Activated CD4-positive, alpha-beta memory T cell treated with anti-CD3 and anti-CD28 coated beads, Interleukin-2, amount 10 ng/mL, durations not matched to agents 7 days and 5 days (primary cell): ENCODE measurements at regions of chr6 and their contacts with region 1.

Region 1: GRCh38 chr6:26270903-26271667 is 93.9 kb upstream of the BTN3A2 start:
- DNase-seq: peak; percentile 87
- H3K4me3 Mint-ChIP-seq: no peak overlapping the region
- H3K27ac Mint-ChIP-seq: no peak overlapping the region
- H3K4me1 Mint-ChIP-seq: peaks cover 35% of the 10 kb centered on the region
- H3K27me3 Mint-ChIP-seq: no peaks in the 10 kb centered on the region

Region 2: GRCh38 chr6:26103770-26104456 is 167.2 kb before region 1 on chr6:
- CTCF ChIA-PET with region 1: no interaction called
- POLR2A ChIA-PET with region 1: interaction called, 15 read pairs
- DNase-seq: peak; percentile 93
- H3K4me3 Mint-ChIP-seq: peak overlapping the region; percentile 80
- H3K27ac Mint-ChIP-seq: peak overlapping the region; percentile 99
- H3K4me1 Mint-ChIP-seq: peaks cover 23% of the 10 kb centered on the region
- H3K27me3 Mint-ChIP-seq: no peaks in the 10 kb centered on the region

Region 3: DNA sequence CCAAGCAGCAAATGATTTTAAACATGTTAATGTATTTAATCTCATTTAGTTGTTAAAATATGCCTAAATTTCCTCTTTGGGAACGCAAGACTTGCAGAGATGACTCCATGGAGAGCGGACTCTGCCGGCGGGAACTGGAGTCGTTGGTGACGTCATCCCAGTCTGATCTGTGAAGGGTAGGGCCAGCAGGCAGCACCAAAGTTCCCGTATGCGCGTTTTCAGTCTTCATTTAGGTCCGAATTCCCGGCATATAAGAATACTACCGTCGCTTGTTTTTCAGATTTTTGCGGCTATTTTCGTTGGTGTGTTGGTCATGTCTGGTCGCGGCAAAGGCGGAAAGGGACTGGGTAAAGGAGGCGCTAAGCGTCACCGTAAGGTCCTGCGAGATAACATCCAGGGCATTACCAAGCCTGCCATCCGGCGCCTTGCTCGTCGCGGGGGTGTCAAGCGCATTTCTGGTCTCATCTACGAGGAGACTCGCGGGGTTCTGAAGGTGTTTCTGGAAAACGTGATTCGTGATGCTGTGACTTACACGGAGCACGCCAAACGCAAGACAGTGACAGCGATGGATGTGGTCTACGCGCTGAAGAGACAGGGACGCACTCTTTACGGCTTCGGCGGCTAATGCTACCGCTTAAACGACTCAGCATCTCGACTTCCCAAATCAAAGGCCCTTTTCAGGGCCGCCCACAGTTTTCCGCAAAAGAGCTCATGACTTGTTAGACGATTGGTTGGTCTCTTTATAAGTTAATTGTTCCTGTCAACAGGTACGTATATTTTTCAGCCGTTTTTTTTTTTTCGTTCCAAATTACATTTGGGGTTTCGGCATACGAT is 66.5 kb before region 1 on chr6:
- CTCF ChIA-PET with region 1: interaction called, 6 read pairs
- POLR2A ChIA-PET with region 1: interaction called, 642 read pairs
- DNase-seq: peak; percentile 90
- H3K4me3 Mint-ChIP-seq: no peak overlapping the region
- H3K27ac Mint-ChIP-seq: no peak overlapping the region
- H3K4me1 Mint-ChIP-seq: peaks cover 35% of the 10 kb centered on the region
- H3K27me3 Mint-ChIP-seq: no peaks in the 10 kb centered on the region

Region 4: GRCh38 chr6:26285143-26286134 is 14.4 kb after region 1 on chr6:
- CTCF ChIA-PET with region 1: interaction called, 66 read pairs
- POLR2A ChIA-PET with region 1: interaction called, 698 read pairs
- DNase-seq: peak; percentile 98
- H3K4me3 Mint-ChIP-seq: peak overlapping the region; percentile 83
- H3K27ac Mint-ChIP-seq: peak overlapping the region; percentile 96
- H3K4me1 Mint-ChIP-seq: peaks cover 39% of the 10 kb centered on the region
- H3K27me3 Mint-ChIP-seq: peaks cover 4% of the 10 kb centered on the region

Region 5: GRCh38 chr6:26537846-26538571 is 266.9 kb after region 1 on chr6 and contains the start of gene HMGN4:
- CTCF ChIA-PET with region 1: interaction called, 4 read pairs
- POLR2A ChIA-PET with region 1: interaction called, 22 read pairs
- DNase-seq: peak; percentile 82
- H3K4me3 Mint-ChIP-seq: peak within 1 kb of the TSS; percentile 94
- H3K27ac Mint-ChIP-seq: peak within 1 kb of the TSS; percentile 98
- H3K4me1 Mint-ChIP-seq: peaks cover 63% of the 10 kb centered on the region
- H3K27me3 Mint-ChIP-seq: no peaks in the 10 kb centered on the region
- total RNA-seq, gene HMGN4: 108 to 109 TPM

Region 6: GRCh38 chr6:27838058-27838944 is 1567.2 kb after region 1 on chr6:
- CTCF ChIA-PET with region 1: no interaction called
- POLR2A ChIA-PET with region 1: interaction called, 44 read pairs
- DNase-seq: peak; percentile 90
- H3K4me3 Mint-ChIP-seq: no peak overlapping the region
- H3K27ac Mint-ChIP-seq: no peak overlapping the region
- H3K4me1 Mint-ChIP-seq: peaks cover 31% of the 10 kb centered on the region
- H3K27me3 Mint-ChIP-seq: no peaks in the 10 kb centered on the region